PC-3 (cell line): ENCODE measurements at regions of chr1 and their contacts with region 1.

Region 1: DNA sequence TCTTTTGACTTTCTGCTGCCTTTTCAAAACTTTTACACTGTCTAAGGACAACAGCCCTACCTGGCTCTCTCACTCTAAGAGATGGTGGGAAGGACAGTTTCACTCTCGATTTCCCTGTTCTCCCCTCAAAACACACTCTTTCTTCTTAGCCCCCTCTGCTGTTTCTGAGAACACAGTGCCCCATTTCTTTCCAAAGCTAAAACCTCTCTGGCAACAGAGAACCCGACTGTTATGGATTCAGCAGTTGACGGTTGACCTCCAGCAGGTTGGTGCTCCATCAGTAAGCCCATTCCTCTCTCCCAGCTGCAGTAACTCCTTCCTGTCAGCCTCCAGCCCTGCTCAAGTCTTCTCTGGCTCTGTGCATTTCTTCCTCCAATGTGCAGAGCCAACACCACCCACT is 88.2 kb upstream of the ABCD3 start:
- DNase-seq: peak; percentile 31
- ATAC-seq: no peak
- H3K4me3 ChIP-seq: no peak overlapping the region
- H3K27ac ChIP-seq: 0 out of 2 replicates have a peak overlapping the region, but pooled peaks have one; percentile 2
- H3K4me1 ChIP-seq: peaks cover 77% of the 10 kb centered on the region
- H3K27me3 ChIP-seq: no peaks in the 10 kb centered on the region
- CTCF ChIP-seq: peak; percentile 56

Region 2: DNA sequence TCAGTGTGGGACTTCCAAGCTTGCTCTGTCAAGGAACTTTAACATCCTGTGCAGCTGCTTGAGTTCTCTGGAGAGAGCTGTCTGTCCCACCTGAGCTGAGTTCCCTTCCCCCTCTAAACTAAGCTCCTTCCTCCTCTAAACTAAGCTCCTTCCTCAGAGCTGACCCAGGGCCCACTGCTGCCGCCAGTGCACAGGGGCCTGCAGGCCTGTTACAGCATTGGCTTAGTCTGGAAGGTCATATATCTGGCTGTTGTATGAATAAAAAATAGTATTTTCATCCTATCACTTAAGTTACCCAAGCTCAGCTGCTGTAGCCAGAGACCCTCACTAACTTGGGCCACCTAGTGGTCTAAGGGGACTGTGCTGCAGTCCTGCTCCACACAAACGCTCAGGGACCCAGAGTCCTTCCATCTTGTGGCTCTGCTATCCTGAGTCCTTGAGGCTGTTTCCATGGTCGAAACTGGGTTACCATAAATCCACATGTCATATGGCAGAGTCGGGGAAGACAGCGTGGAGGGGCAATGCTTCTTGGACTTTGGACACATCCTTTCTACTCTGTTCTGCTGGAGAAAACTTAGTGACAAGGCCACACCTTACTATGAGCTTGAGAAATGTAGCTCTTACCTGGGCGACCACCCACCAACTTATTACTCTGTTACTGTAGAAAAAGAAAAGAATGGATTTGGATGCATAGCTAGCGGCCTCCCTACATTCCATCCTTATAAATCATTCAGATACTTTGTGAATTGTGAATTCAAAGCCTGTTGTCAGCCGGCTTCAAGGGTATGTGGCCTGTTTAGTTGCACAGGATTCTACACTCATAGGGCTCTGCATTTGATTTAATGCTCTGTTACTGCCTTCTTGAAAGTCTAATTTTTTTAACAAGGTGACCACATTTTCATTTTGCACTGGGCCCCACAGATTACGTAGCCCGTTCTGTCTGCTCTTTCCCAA is 349.4 kb before region 1 on chr1:
- CTCF ChIA-PET with region 1: no interaction called
- POLR2A ChIA-PET with region 1: no interaction called
- intact Hi-C with region 1: no loop called
- DNase-seq: peak; percentile 18
- ATAC-seq: no peak; the same call in 1 of the 2 replicates
- H3K4me3 ChIP-seq: no peak overlapping the region
- H3K27ac ChIP-seq: no peak overlapping the region
- H3K4me1 ChIP-seq: peaks cover 21% of the 10 kb centered on the region
- H3K27me3 ChIP-seq: no peaks in the 10 kb centered on the region
- CTCF ChIP-seq: peak; percentile 49

Region 3: DNA sequence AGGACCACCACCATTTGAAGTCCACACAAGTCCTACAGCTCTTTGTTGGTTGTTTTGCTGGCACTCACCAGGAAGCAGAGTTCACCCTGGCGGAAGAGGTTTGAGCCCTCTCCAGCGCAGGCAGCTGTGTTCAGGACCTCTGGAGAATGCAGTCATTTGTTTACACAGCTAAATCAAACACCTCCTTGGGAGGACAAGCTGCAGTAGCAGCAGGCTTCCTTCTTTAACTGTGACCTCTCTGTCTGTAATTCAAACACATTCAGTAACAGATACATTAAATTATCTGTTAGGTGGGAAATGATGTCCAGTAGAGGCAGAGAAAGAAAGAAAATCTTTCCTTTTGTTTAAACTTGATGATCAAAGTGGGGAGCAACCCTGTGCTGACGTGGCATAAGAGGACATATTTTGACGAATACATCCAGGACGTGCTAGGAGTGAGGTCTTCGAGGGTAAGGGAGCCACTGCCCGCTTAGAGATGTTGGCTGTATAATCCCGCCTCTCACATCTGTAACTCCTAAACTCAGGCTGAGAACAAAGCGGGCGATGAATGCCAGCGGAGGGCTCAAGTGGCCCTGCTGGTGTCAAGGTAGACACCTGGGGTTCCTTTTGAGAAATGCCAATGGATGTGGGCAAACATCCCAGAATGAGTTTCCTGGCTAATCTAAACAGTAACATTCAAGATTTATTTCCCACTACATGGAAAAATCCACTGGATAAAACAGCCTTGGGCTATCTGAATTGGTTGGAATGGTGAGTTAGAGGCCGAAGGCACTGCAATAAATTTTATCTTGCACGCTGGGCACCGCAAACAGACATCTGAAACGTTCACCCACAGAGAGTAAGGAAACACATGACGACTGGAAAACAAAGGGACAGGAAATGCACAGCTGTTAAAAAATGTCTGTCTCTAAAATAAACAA is 260.7 kb before region 1 on chr1:
- CTCF ChIA-PET with region 1: interaction called, 4 read pairs
- POLR2A ChIA-PET with region 1: no interaction called
- intact Hi-C with region 1: loop called (anchors 2 kb)
- DNase-seq: peak; percentile 84
- ATAC-seq: peak; percentile 83
- H3K4me3 ChIP-seq: peak overlapping the region; percentile 27; the same call in 1 of the 2 replicates
- H3K27ac ChIP-seq: peak overlapping the region; percentile 80
- H3K4me1 ChIP-seq: peaks cover 45% of the 10 kb centered on the region
- H3K27me3 ChIP-seq: no peaks in the 10 kb centered on the region
- CTCF ChIP-seq: no peak